ENCODE measurements at regions of chr17 and their contacts with region 1.

Region 1: DNA sequence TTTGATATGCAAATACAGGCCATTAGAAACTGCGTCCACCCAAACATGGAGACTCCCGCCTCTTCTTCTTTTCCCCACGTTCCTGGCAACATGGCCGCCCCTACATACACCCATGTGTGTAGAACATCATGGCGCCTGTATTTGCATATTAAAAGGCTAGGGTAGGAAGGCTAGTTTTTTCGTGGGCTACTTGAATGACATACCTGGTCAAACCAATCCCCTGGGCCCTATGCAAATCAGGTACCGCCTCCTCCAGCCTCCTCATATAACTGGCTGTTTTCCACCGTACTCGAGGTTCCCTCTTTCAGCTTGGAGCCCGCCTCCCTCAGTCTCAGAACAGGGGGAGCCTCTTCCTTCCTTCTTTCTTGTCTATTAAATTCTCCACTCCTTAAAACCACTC is 840 bp upstream of the CD300LB start:
- DNase-seq: no peak
- ATAC-seq: no peak
- H3K4me3 ChIP-seq: no peak overlapping the region
- H3K27ac ChIP-seq: no peak overlapping the region
- H3K4me1 ChIP-seq: no peaks in the 10 kb centered on the region
- H3K27me3 ChIP-seq: peaks cover 3 to 50% of the 10 kb centered on the region in 2 experiments; a peak in 4 of 5 replicates
- CTCF ChIP-seq: no peak
- EP300 ChIP-seq: no peak
- POLR2A ChIP-seq: no peak
- RAD21 ChIP-seq: no peak

Region 2: GRCh38 chr17:74368092-74369081 is 163.7 kb before region 1 on chr17:
- CTCF ChIA-PET with region 1: interaction called, 3 read pairs
- POLR2A ChIA-PET with region 1: no interaction called
- in situ Hi-C with region 1: no loop called
- intact Hi-C with region 1: loop called (anchors 5 kb)
- DNase-seq: peak; percentile 53
- ATAC-seq: peak; percentile 76
- H3K4me3 ChIP-seq: no peak overlapping the region
- H3K27ac ChIP-seq: no peak overlapping the region
- H3K4me1 ChIP-seq: peaks cover 3% of the 10 kb centered on the region
- H3K27me3 ChIP-seq: peaks cover 3 to 41% of the 10 kb centered on the region in 2 experiments; a peak in 4 of 5 replicates
- CTCF ChIP-seq: peak; percentile 93
- EP300 ChIP-seq: no peak
- POLR2A ChIP-seq: no peak
- RAD21 ChIP-seq: peak; percentile 89

Region 3: GRCh38 chr17:74584292-74585060 is 52.4 kb after region 1 on chr17:
- CTCF ChIA-PET with region 1: no interaction called
- POLR2A ChIA-PET with region 1: no interaction called
- in situ Hi-C with region 1: no loop called
- intact Hi-C with region 1: no loop called
- DNase-seq: no peak
- ATAC-seq: no peak
- H3K4me3 ChIP-seq: no peak overlapping the region
- H3K27ac ChIP-seq: no peak overlapping the region
- H3K4me1 ChIP-seq: no peaks in the 10 kb centered on the region
- H3K27me3 ChIP-seq: peaks cover 0 to 46% of the 10 kb centered on the region in 2 experiments; a peak in 3 of 5 replicates
- CTCF ChIP-seq: no peak
- EP300 ChIP-seq: no peak
- POLR2A ChIP-seq: no peak
- RAD21 ChIP-seq: no peak